ENCODE measurements at regions of chr3 and their contacts with region 1.

Region 1: DNA sequence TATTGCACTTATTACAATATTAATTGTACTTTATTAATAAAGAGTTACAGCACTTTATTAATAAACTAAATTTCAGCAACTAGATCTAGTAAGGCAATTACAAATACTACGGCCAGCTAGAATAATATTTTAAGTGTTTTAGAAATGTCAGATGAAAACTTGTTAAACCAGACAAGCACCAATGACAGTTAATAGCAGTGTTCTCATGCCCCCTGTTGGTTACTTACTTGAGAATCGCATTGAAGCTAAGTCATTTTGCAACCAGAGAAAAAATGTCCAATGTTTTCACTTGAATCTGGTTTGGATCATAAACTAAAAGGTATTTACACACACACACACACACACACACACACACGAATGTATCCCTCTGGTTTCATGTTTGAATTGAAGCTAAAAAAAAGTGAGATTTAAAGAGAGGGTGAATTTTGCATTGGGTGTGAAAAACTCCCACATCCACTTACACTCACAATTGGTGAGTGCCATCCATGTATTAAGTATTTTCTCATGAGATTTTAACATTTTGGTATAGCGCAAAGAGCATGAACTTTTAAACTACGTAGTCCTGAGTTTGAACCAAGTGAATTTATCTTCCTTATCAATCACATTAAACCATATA is 347.7 kb downstream of the ZBBX start:
- DNase-seq: peak; percentile 78
- H3K4me3 Mint-ChIP-seq: no peak overlapping the region
- H3K27ac Mint-ChIP-seq: no peak overlapping the region
- H3K4me1 Mint-ChIP-seq: no peaks in the 10 kb centered on the region
- H3K27me3 Mint-ChIP-seq: no peaks in the 10 kb centered on the region
- CTCF ChIP-seq: peak; percentile 57

Region 2: GRCh38 chr3:165206454-165207266 is 1825.7 kb before region 1 on chr3:
- CTCF ChIA-PET with region 1: interaction called, 4 read pairs
- POLR2A ChIA-PET with region 1: no interaction called
- intact Hi-C with region 1: loop called (anchors 5 kb)
- DNase-seq: peak; percentile 85
- H3K4me3 Mint-ChIP-seq: peak overlapping the region; percentile 70
- H3K27ac Mint-ChIP-seq: no peak overlapping the region
- H3K4me1 Mint-ChIP-seq: no peaks in the 10 kb centered on the region
- H3K27me3 Mint-ChIP-seq: no peaks in the 10 kb centered on the region
- CTCF ChIP-seq: peak; percentile 74

Region 3: GRCh38 chr3:165339753-165340152 is 1692.6 kb before region 1 on chr3:
- CTCF ChIA-PET with region 1: interaction called, 3 read pairs
- POLR2A ChIA-PET with region 1: no interaction called
- intact Hi-C with region 1: loop called (anchors 1 kb)
- DNase-seq: peak; percentile 45
- H3K4me3 Mint-ChIP-seq: no peak overlapping the region
- H3K27ac Mint-ChIP-seq: no peak overlapping the region
- H3K4me1 Mint-ChIP-seq: no peaks in the 10 kb centered on the region
- H3K27me3 Mint-ChIP-seq: no peaks in the 10 kb centered on the region
- CTCF ChIP-seq: peak; percentile 53

Region 4: GRCh38 chr3:166013073-166013679 is 1019.2 kb before region 1 on chr3:
- CTCF ChIA-PET with region 1: interaction called, 9 read pairs
- POLR2A ChIA-PET with region 1: interaction called, 4 read pairs
- intact Hi-C with region 1: loop called (anchors 1 kb)
- DNase-seq: peak; percentile 70
- H3K4me3 Mint-ChIP-seq: no peak overlapping the region
- H3K27ac Mint-ChIP-seq: no peak overlapping the region
- H3K4me1 Mint-ChIP-seq: no peaks in the 10 kb centered on the region
- H3K27me3 Mint-ChIP-seq: no peaks in the 10 kb centered on the region
- CTCF ChIP-seq: peak; percentile 53

Region 5: DNA sequence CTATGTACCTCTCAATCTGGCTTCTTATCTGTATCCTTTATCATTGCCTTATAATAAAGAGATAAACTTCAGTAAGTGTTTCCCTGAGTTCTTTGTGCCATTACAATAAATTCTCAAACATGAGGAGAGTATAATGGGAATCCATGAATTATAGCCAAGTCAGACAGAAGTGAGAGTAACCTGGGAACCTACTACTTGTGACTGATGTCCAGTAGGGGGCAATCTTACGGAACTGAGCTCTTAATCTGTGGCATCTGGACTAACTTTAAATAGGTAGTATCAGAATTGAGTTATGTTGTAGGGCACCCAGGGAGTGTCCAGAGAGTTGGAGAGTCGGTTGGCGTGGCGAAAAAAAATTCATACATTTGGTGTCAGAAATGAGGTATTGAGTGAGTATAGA is 194.8 kb before region 1 on chr3:
- CTCF ChIA-PET with region 1: no interaction called
- POLR2A ChIA-PET with region 1: no interaction called
- intact Hi-C with region 1: loop called (anchors 5 kb)
- DNase-seq: peak; percentile 43
- H3K4me3 Mint-ChIP-seq: no peak overlapping the region
- H3K27ac Mint-ChIP-seq: no peak overlapping the region
- H3K4me1 Mint-ChIP-seq: no peaks in the 10 kb centered on the region
- H3K27me3 Mint-ChIP-seq: no peaks in the 10 kb centered on the region
- CTCF ChIP-seq: no peak

Measured in MCF 10A (cell line).